ENCODE measurements at regions of chr20 and their contacts with region 1.

Region 1: DNA sequence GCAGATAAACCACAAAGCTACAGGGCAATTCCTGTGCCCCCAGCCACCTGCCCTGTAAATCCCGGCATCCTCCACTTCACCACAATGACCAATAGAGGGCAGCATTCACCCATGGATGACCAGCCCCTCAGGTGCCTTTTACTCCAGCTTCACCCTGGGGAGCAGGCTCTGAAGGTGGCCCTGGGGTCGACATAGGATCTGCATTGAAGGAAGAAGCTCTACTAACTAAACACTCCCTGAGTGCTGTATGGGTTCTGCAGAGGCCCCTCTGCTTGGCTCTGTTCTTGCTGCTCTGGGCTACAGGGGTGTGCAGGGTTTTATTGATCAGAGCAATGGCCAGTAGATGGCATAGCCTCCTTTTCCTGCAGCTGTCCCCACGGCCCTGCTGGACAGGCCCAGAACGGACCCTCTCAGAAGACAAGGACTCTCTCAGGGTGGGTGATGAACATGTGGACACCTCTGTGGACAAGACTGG is 20.3 kb downstream of the CST4 start:
- DNase-seq: peak; percentile 84 to 87
- H3K4me3 ChIP-seq: no peak overlapping the region
- H3K4me3 Mint-ChIP-seq: no peak overlapping the region
- H3K27ac Mint-ChIP-seq: no peak overlapping the region
- H3K4me1 ChIP-seq: peaks cover 20% of the 10 kb centered on the region
- H3K4me1 Mint-ChIP-seq: peaks cover 16% of the 10 kb centered on the region
- H3K27me3 ChIP-seq: no peaks in the 10 kb centered on the region
- H3K27me3 Mint-ChIP-seq: no peaks in the 10 kb centered on the region
- CTCF ChIP-seq: peak; percentile 75 to 97

Region 2: GRCh38 chr20:23246717-23247664 is 421.5 kb before region 1 on chr20:
- CTCF ChIA-PET with region 1: no interaction called
- POLR2A ChIA-PET with region 1: no interaction called
- intact Hi-C with region 1: no loop called
- DNase-seq: no peak
- H3K4me3 ChIP-seq: no peak overlapping the region
- H3K4me3 Mint-ChIP-seq: no peak overlapping the region
- H3K27ac Mint-ChIP-seq: no peak overlapping the region
- H3K4me1 ChIP-seq: no peaks in the 10 kb centered on the region; the same call in 1 of the 2 replicates
- H3K4me1 Mint-ChIP-seq: peaks cover 8% of the 10 kb centered on the region
- H3K27me3 ChIP-seq: no peaks in the 10 kb centered on the region
- H3K27me3 Mint-ChIP-seq: no peaks in the 10 kb centered on the region
- CTCF ChIP-seq: no peak

Region 3: DNA sequence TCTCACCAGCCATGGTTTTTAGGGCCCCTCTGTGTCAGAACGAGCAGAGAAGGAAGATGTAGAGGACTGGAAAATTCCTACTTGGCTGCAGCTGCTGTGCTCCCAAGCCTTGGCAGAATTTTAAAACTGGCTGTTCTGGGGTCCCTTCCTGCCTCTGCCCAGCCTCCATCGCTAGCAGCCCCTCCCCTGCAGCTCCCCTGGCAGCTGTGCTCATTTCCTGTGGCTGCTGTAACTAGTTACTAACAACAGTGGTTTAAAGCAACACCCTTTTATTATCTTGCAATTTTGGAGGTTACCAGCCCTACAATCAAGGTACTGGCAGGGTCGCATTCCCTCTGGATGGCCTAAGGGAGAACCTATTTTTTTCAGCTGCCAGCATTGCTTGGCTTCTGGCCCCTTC is 212.1 kb before region 1 on chr20:
- CTCF ChIA-PET with region 1: no interaction called
- POLR2A ChIA-PET with region 1: no interaction called
- intact Hi-C with region 1: no loop called
- DNase-seq: no peak
- H3K4me3 ChIP-seq: no peak overlapping the region
- H3K4me3 Mint-ChIP-seq: no peak overlapping the region
- H3K27ac Mint-ChIP-seq: no peak overlapping the region
- H3K4me1 ChIP-seq: no peaks in the 10 kb centered on the region
- H3K4me1 Mint-ChIP-seq: no peaks in the 10 kb centered on the region
- H3K27me3 ChIP-seq: no peaks in the 10 kb centered on the region
- H3K27me3 Mint-ChIP-seq: peaks cover 17% of the 10 kb centered on the region
- CTCF ChIP-seq: no peak

Region 4: GRCh38 chr20:23655491-23656211 is 12.9 kb before region 1 on chr20:
- CTCF ChIA-PET with region 1: no interaction called
- POLR2A ChIA-PET with region 1: no interaction called
- intact Hi-C with region 1: no loop called
- DNase-seq: no peak
- H3K4me3 ChIP-seq: no peak overlapping the region
- H3K4me3 Mint-ChIP-seq: no peak overlapping the region
- H3K27ac Mint-ChIP-seq: no peak overlapping the region
- H3K4me1 ChIP-seq: peaks cover 48% of the 10 kb centered on the region
- H3K4me1 Mint-ChIP-seq: peaks cover 43% of the 10 kb centered on the region
- H3K27me3 ChIP-seq: no peaks in the 10 kb centered on the region
- H3K27me3 Mint-ChIP-seq: no peaks in the 10 kb centered on the region
- CTCF ChIP-seq: no peak

Region 5: DNA sequence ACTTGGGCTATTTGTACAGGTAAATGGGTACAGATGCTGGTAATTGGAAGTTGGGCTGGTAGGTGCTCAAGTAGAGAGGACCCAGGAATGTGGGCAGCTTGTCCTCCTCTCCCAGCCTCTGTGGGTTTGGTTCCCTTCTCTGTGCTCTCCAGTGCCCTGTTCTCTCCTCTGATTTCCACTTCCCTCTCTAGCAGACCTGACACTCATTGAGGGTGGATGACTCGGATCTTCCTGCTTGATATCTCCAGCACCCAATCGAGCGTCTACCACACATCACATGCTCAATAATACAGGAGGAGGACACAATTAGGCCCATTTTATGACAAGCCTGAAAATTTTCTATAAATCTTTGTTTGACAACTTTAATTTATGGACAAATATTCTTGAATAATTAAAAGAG is 58.5 kb after region 1 on chr20:
- CTCF ChIA-PET with region 1: interaction called, 6 read pairs
- POLR2A ChIA-PET with region 1: no interaction called
- intact Hi-C with region 1: loop called (anchors 1 kb)
- DNase-seq: no peak
- H3K4me3 ChIP-seq: no peak overlapping the region
- H3K4me3 Mint-ChIP-seq: no peak overlapping the region
- H3K27ac Mint-ChIP-seq: no peak overlapping the region
- H3K4me1 ChIP-seq: no peaks in the 10 kb centered on the region
- H3K4me1 Mint-ChIP-seq: peaks cover 6% of the 10 kb centered on the region
- H3K27me3 ChIP-seq: no peaks in the 10 kb centered on the region
- H3K27me3 Mint-ChIP-seq: no peaks in the 10 kb centered on the region
- CTCF ChIP-seq: no peak

Region 6: DNA sequence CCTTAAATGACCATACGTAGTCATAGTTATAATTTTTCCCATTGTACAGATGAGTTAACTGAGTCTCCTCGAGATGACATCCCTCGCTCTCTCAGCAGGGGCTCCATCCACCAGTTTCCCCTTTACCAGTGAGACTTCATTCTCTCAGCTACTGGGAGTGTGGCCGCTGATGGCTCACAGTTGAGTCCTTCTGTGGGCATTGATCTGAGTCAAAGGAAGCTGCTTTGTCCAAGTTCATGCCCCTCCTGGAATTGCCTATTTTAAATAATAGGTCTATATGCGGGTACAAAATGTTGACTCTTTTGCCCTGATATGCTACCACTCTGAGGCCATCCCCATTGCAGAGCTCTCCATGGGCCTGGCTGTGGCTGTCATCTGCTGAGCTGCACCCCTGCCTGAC is 97.1 kb after region 1 on chr20:
- CTCF ChIA-PET with region 1: no interaction called
- POLR2A ChIA-PET with region 1: no interaction called
- intact Hi-C with region 1: no loop called
- DNase-seq: no peak
- H3K4me3 ChIP-seq: no peak overlapping the region
- H3K4me3 Mint-ChIP-seq: no peak overlapping the region
- H3K27ac Mint-ChIP-seq: no peak overlapping the region
- H3K4me1 ChIP-seq: no peaks in the 10 kb centered on the region
- H3K4me1 Mint-ChIP-seq: no peaks in the 10 kb centered on the region
- H3K27me3 ChIP-seq: no peaks in the 10 kb centered on the region
- H3K27me3 Mint-ChIP-seq: no peaks in the 10 kb centered on the region
- CTCF ChIP-seq: no peak

Region 7: GRCh38 chr20:23782366-23782985 is 114.0 kb after region 1 on chr20:
- CTCF ChIA-PET with region 1: interaction called, 5 read pairs
- POLR2A ChIA-PET with region 1: no interaction called
- intact Hi-C with region 1: loop called (anchors 1 kb)
- DNase-seq: peak; percentile 75 to 79
- H3K4me3 ChIP-seq: no peak overlapping the region
- H3K4me3 Mint-ChIP-seq: no peak overlapping the region
- H3K27ac Mint-ChIP-seq: no peak overlapping the region
- H3K4me1 ChIP-seq: no peaks in the 10 kb centered on the region
- H3K4me1 Mint-ChIP-seq: no peaks in the 10 kb centered on the region
- H3K27me3 ChIP-seq: no peaks in the 10 kb centered on the region
- H3K27me3 Mint-ChIP-seq: no peaks in the 10 kb centered on the region
- CTCF ChIP-seq: peak; percentile 62 to 85

Region 8: DNA sequence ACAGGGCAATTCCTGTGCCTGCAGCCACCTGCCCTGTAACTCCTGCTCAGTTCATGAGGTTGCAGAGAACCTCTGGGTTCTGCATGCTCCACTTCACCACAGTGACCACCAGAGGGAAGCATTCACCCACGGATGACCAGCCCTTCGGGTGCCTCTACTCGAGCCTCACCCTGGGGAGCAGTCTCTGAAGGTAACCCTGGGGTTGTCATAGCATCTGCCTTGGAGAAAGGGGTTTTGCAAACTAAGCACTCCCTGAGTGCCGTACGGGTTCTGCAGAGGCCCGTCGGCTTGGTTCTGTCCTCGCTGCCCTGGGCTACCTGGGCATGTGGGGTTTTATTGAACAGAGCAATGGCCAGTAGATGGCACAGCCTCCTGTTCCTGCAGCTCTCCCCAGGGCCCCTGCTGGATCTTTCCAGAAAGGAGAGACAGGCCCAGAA is 221.3 kb after region 1 on chr20:
- CTCF ChIA-PET with region 1: interaction called, 3 read pairs
- POLR2A ChIA-PET with region 1: no interaction called
- intact Hi-C with region 1: loop called (anchors 10 kb)
- DNase-seq: peak; percentile 78 to 80
- H3K4me3 ChIP-seq: no peak overlapping the region
- H3K4me3 Mint-ChIP-seq: no peak overlapping the region
- H3K27ac Mint-ChIP-seq: no peak overlapping the region
- H3K4me1 ChIP-seq: peaks cover under 1% of the 10 kb centered on the region; the same call in 1 of the 2 replicates
- H3K4me1 Mint-ChIP-seq: no peaks in the 10 kb centered on the region
- H3K27me3 ChIP-seq: no peaks in the 10 kb centered on the region
- H3K27me3 Mint-ChIP-seq: peaks cover 8% of the 10 kb centered on the region
- CTCF ChIP-seq: peak; percentile 79 to 86

Measured in Caco-2 (cell line).